ENCODE measurements at regions of chr16 and their contacts with region 1.

Region 1: GRCh38 chr16:26031286-26031685 is 339.5 kb downstream of the HS3ST4 start:
- DNase-seq: no peak
- H3K4me3 ChIP-seq: no peak overlapping the region
- H3K27ac ChIP-seq: no peak overlapping the region
- H3K4me1 ChIP-seq: no peaks in the 10 kb centered on the region
- H3K27me3 ChIP-seq: no peaks in the 10 kb centered on the region
- CTCF ChIP-seq: no peak

Region 2: GRCh38 chr16:25950586-25951281 is 80.6 kb before region 1 on chr16:
- intact Hi-C with region 1: no loop called
- DNase-seq: no peak
- H3K4me3 ChIP-seq: no peak overlapping the region
- H3K27ac ChIP-seq: no peak overlapping the region
- H3K4me1 ChIP-seq: no peaks in the 10 kb centered on the region
- H3K27me3 ChIP-seq: no peaks in the 10 kb centered on the region
- CTCF ChIP-seq: no peak

Region 3: GRCh38 chr16:25978218-25978617 is 53.1 kb before region 1 on chr16:
- intact Hi-C with region 1: loop called (anchors 10 kb)
- DNase-seq: no peak
- H3K4me3 ChIP-seq: no peak overlapping the region
- H3K27ac ChIP-seq: no peak overlapping the region
- H3K4me1 ChIP-seq: no peaks in the 10 kb centered on the region
- H3K27me3 ChIP-seq: no peaks in the 10 kb centered on the region
- CTCF ChIP-seq: no peak

Measured in tibial artery (tissue), 4 donors.